ENCODE measurements at regions of chr18 and their contacts with region 1.

Region 1: DNA sequence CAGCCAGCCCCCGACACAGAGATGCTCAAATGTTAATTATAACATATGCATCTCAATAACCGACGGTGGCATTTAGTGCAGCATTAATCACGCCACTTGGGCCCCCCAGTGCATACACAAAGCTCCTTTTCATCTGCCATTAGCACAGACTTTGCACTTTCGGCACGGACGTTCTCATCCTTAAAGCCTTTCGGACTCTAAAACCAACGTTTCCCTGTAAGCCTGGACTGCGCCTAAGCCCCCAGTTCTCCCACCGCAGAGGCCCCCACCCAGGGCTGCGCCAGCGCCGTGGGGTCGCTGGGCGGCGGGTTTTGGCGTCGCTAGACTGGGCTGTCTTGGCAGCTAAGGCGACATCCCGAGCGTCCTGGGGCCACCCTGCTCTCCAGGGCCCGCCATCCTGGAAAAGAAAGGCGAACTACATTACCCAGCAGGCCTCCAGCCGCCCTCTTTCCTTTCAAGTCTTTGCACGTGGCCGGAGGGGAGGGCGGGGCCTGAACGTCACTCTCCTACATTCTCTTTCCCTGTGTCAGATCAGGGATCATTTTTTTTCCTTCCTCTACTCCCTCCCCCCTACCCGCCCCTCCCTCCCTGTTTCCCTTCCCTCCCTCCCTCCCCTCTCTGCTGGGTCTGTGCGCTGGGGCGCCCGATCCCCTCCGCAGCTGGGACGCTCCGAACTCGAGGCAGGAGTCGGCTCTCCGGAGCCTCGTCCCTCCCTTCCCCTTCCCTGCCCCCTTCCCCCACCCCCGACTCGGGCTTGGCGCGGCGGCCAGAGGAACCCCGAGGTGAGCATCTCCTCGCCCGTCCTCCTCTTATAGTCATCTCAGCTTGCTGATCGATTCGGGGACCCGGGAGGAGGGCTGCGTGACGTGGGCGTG is at the start of gene CTIF:
- DNase-seq: peak; percentile 96
- ATAC-seq: peak; percentile 75
- H3K4me3 ChIP-seq: peak within 1 kb of the TSS; percentile 96
- H3K27ac ChIP-seq: peak within 1 kb of the TSS; percentile 99
- H3K4me1 ChIP-seq: peaks cover 26% of the 10 kb centered on the region
- H3K27me3 ChIP-seq: no peaks in the 10 kb centered on the region
- CTCF ChIP-seq: no peak
- POLR2A ChIP-seq: 0 out of 2 replicates have a peak, but pooled peaks have one; percentile 15
- RAD21 ChIP-seq: 0 out of 2 replicates have a peak, but pooled peaks have one; percentile 6
- total RNA-seq, gene CTIF: 25.1 and 27.5 TPM in 2 replicates

Region 2: DNA sequence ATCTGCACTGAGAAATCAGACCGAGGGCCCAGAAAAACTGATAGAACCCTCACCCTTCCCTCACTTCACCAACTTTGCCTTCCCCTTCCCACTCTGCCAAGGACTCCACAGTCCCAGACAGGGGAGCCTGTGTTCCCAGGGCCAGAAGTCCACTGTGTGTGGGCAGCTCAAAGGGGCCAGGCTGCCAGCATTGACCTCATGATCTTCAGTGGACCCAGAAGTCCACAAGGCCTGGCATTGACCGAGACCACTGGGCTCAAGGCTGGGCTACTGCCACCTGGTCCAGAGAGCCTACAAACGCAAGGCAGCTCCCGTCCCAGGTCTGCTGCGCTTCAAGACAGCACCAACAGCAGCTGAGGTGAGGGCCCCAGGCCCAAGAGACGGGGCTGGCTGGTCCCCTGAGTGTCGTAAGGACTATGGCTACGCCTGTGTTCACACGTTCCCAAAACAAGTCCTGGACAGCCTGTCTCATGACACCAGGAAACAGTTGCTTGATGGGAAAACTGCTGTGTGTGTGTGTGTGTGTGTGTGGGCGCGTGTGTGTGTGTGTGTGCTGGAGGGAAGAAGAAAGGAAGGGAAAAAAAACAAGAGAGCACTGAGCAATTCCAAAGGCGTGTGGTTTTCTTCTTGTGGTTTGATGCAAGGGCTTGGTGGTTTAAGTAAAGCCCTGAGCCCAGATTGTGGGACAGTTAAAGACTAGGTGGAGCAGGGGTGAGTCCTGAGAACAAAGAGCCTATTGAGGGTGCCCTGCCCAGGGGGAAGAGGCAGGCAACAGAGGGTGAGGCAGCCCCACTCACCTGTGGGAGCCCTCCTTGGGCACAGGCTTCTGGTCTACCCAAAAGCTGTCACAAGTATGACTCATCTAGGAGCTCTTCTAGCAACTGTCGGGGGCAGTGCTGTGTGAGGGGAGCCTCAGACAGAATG is 83.0 kb before region 1 on chr18:
- CTCF ChIA-PET with region 1: no interaction called
- POLR2A ChIA-PET with region 1: no interaction called
- dilution Hi-C with region 1: no loop called
- in situ Hi-C with region 1: no loop called
- intact Hi-C with region 1: no loop called
- DNase-seq: peak; percentile 89
- ATAC-seq: peak; percentile 61
- H3K4me3 ChIP-seq: no peak overlapping the region
- H3K27ac ChIP-seq: no peak overlapping the region
- H3K4me1 ChIP-seq: peaks cover 6% of the 10 kb centered on the region
- H3K27me3 ChIP-seq: peaks cover 49% of the 10 kb centered on the region
- CTCF ChIP-seq: no peak
- POLR2A ChIP-seq: no peak
- RAD21 ChIP-seq: no peak

Region 3: DNA sequence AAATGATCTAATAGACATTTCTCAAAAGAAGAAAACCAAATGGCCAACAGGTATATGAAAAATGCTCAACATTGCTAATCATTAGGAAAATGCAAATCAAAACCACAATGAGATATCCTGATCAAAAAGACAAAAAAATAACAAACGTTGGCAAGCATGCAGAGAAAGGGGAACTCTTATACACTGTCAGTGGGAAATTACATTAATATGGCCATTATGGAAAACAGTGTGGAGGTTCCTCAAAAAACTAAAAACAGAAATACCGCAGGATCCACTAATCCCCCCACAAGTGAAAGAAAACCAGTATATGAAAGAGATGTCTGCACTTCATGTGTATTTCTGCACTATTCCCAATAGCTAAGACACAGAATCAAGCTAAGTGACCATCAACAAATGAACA is 57.7 kb before region 1 on chr18:
- CTCF ChIA-PET with region 1: no interaction called
- POLR2A ChIA-PET with region 1: no interaction called
- dilution Hi-C with region 1: no loop called
- in situ Hi-C with region 1: loop called (anchors 5 kb)
- intact Hi-C with region 1: loop called (anchors 1 kb)
- DNase-seq: no peak
- ATAC-seq: no peak
- H3K4me3 ChIP-seq: no peak overlapping the region
- H3K27ac ChIP-seq: no peak overlapping the region
- H3K4me1 ChIP-seq: no peaks in the 10 kb centered on the region; the same call in 1 of the 2 replicates
- H3K27me3 ChIP-seq: no peaks in the 10 kb centered on the region
- CTCF ChIP-seq: no peak
- POLR2A ChIP-seq: no peak
- RAD21 ChIP-seq: no peak

Region 4: DNA sequence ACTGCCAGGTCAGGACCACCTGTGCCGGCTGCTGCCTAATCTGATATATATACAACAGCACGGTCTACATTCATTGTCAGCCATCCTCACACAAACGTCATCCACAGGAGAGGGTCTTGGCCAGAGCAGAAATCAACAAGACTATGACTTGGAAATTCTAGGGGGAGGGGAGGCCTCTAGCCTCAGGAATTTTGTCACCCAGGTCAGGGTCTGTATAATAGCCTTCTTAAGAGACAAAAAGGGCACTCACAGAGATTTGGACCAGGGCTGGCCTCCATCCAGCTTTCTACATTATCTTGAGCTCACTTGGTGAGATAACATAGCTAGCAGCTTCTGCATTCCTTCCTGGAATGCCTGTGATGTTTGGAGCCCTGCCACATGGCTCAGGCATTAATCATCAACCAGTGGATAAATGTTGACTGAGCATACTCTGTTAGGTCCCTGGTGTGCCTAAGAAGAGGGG is 50.3 kb before region 1 on chr18:
- CTCF ChIA-PET with region 1: no interaction called
- POLR2A ChIA-PET with region 1: no interaction called
- dilution Hi-C with region 1: no loop called
- in situ Hi-C with region 1: loop called (anchors 5 kb)
- intact Hi-C with region 1: loop called (anchors 2 kb)
- DNase-seq: peak; percentile 93
- ATAC-seq: peak; percentile 87
- H3K4me3 ChIP-seq: no peak overlapping the region
- H3K27ac ChIP-seq: peak overlapping the region; percentile 0; the same call in 1 of the 2 replicates
- H3K4me1 ChIP-seq: peaks cover 17% of the 10 kb centered on the region
- H3K27me3 ChIP-seq: no peaks in the 10 kb centered on the region
- CTCF ChIP-seq: no peak
- POLR2A ChIP-seq: no peak
- RAD21 ChIP-seq: no peak; the same call in 1 of the 2 replicates

Region 5: GRCh38 chr18:48605408-48605845 is 66.7 kb after region 1 on chr18:
- CTCF ChIA-PET with region 1: no interaction called
- POLR2A ChIA-PET with region 1: no interaction called
- dilution Hi-C with region 1: no loop called
- in situ Hi-C with region 1: no loop called
- intact Hi-C with region 1: loop called (anchors 1 kb)
- DNase-seq: peak; percentile 43
- ATAC-seq: no peak
- H3K4me3 ChIP-seq: no peak overlapping the region
- H3K27ac ChIP-seq: no peak overlapping the region
- H3K4me1 ChIP-seq: peaks cover 24% of the 10 kb centered on the region
- H3K27me3 ChIP-seq: no peaks in the 10 kb centered on the region
- CTCF ChIP-seq: peak; percentile 49
- POLR2A ChIP-seq: no peak
- RAD21 ChIP-seq: peak; percentile 38

Region 6: GRCh38 chr18:48629730-48630324 is 91.1 kb after region 1 on chr18:
- CTCF ChIA-PET with region 1: no interaction called
- POLR2A ChIA-PET with region 1: no interaction called
- dilution Hi-C with region 1: no loop called
- in situ Hi-C with region 1: no loop called
- intact Hi-C with region 1: loop called (anchors 5 kb)
- DNase-seq: peak; percentile 100
- ATAC-seq: peak; percentile 95
- H3K4me3 ChIP-seq: no peak overlapping the region
- H3K27ac ChIP-seq: peak overlapping the region; percentile 57
- H3K4me1 ChIP-seq: peaks cover 23% of the 10 kb centered on the region
- H3K27me3 ChIP-seq: no peaks in the 10 kb centered on the region
- CTCF ChIP-seq: no peak
- POLR2A ChIP-seq: no peak
- RAD21 ChIP-seq: peak; percentile 23; the same call in 1 of the 2 replicates

Region 7: GRCh38 chr18:48663931-48664847 is 125.4 kb after region 1 on chr18:
- CTCF ChIA-PET with region 1: interaction called, 3 read pairs
- POLR2A ChIA-PET with region 1: no interaction called
- dilution Hi-C with region 1: no loop called
- in situ Hi-C with region 1: no loop called
- intact Hi-C with region 1: loop called (anchors 1 kb)
- DNase-seq: peak; percentile 36
- ATAC-seq: peak; percentile 36
- H3K4me3 ChIP-seq: no peak overlapping the region
- H3K27ac ChIP-seq: no peak overlapping the region
- H3K4me1 ChIP-seq: peaks cover 25% of the 10 kb centered on the region
- H3K27me3 ChIP-seq: no peaks in the 10 kb centered on the region
- CTCF ChIP-seq: peak; percentile 82
- POLR2A ChIP-seq: no peak
- RAD21 ChIP-seq: peak; percentile 88

Region 8: GRCh38 chr18:48928787-48929186 is 390.0 kb after region 1 on chr18:
- CTCF ChIA-PET with region 1: no interaction called
- POLR2A ChIA-PET with region 1: no interaction called
- dilution Hi-C with region 1: no loop called
- in situ Hi-C with region 1: loop called (anchors 25 kb)
- intact Hi-C with region 1: no loop called
- DNase-seq: peak; percentile 42
- ATAC-seq: peak; percentile 13; the same call in 1 of the 2 replicates
- H3K4me3 ChIP-seq: no peak overlapping the region
- H3K27ac ChIP-seq: peak overlapping the region; percentile 62
- H3K4me1 ChIP-seq: peaks cover 73% of the 10 kb centered on the region
- H3K27me3 ChIP-seq: no peaks in the 10 kb centered on the region
- CTCF ChIP-seq: no peak
- POLR2A ChIP-seq: no peak
- RAD21 ChIP-seq: no peak

Measured in IMR-90 (cell line).